Psoas muscle (tissue), 8 donors: ENCODE measurements at regions of chr4 and their contacts with region 1.

Region 1: DNA sequence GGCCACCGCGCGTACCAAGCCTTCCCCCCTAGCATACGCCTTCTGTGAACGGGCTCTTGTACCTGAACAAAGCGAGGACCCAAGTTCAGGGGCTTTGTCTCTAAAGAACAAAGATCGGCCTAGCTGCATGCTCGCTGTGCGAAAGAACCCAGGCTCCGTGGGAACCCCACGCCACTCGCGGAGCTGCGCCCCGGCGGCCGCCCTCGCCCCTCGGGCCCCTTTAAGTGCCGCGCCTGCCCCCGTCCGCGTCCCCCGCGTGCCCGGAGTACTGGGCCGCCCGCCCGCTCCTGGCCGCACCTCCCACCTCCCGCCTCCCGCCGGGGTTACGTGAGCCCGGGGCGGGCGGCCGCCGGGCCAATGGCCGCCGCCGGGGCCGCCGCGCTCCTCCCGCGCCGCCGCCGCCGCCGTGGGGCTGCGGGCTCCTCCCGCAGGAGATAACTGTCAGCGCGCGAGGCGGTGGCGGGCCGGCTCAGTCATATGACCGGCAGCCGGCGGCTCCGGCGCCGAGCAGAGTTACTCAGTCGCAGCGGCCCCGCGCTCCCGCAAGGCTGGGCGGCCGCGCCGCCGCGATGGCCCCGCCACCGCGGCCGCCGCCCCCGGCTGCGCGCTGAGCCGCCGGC is at the start of gene FNIP2:
- DNase-seq: peak; percentile 84 to 93
- ATAC-seq: peak; percentile 92 to 96 (median 94)
- H3K4me3 ChIP-seq: peak within 1 kb of the TSS; percentile 70
- H3K27ac ChIP-seq: peak within 1 kb of the TSS; percentile 96
- H3K4me1 ChIP-seq: peaks cover 43% of the 10 kb centered on the region
- H3K27me3 ChIP-seq: no peaks in the 10 kb centered on the region
- CTCF ChIP-seq: no peak
- total RNA-seq, gene FNIP2: 31.5 to 92.1 (median 53.4) TPM

Region 2: DNA sequence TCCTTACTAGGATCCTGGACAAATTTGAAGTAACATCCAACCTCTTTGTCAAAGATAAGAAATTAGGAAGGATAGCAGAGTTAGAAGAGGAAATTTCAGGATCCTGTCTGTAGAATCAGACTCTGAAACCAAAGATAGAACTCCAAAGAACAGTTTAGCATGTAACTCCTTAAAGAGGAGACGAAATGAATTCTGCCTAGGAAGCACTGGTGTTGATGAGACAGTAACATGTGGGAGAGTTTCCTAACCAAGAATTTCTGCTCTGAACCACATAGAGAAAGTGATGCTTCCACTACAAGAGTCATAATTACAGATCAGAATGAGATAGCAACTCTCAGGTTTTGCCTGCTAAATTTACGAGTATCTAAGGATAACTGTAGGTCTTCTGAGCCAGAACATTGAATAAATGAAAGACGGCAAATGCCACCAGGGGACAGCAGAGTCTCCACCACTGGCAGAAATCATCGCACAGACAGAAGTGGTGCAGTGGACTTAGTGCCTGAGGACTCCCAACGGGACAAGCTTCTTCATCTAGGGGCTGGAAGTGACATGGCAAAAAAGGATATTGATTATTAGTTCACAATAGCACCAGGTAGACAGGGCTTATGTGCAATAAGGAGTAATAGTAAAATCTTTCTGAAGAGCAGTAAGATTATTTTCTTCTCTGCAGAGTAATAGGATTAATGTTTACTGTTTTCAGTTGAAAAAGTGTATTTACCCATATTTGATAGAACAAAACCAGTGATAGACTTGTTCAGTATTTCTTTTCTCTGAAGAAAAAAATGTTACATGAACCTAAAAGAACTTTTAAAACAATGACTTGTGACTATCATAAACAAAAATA is 38.7 kb before region 1 on chr4:
- intact Hi-C with region 1: loop called (anchors 5 kb)
- DNase-seq: peak; percentile 43 to 66
- ATAC-seq: peak; percentile 87 to 99 (median 94)
- H3K4me3 ChIP-seq: no peak overlapping the region
- H3K27ac ChIP-seq: no peak overlapping the region
- H3K4me1 ChIP-seq: no peaks in the 10 kb centered on the region
- H3K27me3 ChIP-seq: no peaks in the 10 kb centered on the region
- CTCF ChIP-seq: peak; percentile 86

Region 3: GRCh38 chr4:158809611-158810486 is 41.2 kb after region 1 on chr4:
- intact Hi-C with region 1: loop called in 1 of 2 experiments (anchors 2 kb)
- DNase-seq: no peak
- ATAC-seq: peak; percentile 74 to 83 (median 78)
- H3K4me3 ChIP-seq: peak overlapping the region; percentile 17
- H3K27ac ChIP-seq: peak overlapping the region; percentile 90
- H3K4me1 ChIP-seq: peaks cover 82% of the 10 kb centered on the region
- H3K27me3 ChIP-seq: no peaks in the 10 kb centered on the region
- CTCF ChIP-seq: no peak

Region 4: GRCh38 chr4:158824425-158825274 is 56.0 kb after region 1 on chr4:
- intact Hi-C with region 1: loop called in 1 of 2 experiments (anchors 1 kb)
- DNase-seq: peak in 1 of 2 donors; percentile 43
- ATAC-seq: peak in 3 of 4 donors; percentile 42 to 63 (median 56)
- H3K4me3 ChIP-seq: peak overlapping the region; percentile 4
- H3K27ac ChIP-seq: peak overlapping the region; percentile 85
- H3K4me1 ChIP-seq: peaks cover 70% of the 10 kb centered on the region
- H3K27me3 ChIP-seq: no peaks in the 10 kb centered on the region
- CTCF ChIP-seq: no peak

Region 5: GRCh38 chr4:158841540-158841939 is 72.9 kb after region 1 on chr4:
- intact Hi-C with region 1: loop called in 1 of 2 experiments (anchors 5 kb)
- DNase-seq: no peak
- ATAC-seq: peak; percentile 60 to 96 (median 88)
- H3K4me3 ChIP-seq: no peak overlapping the region
- H3K27ac ChIP-seq: peak overlapping the region; percentile 36
- H3K4me1 ChIP-seq: peaks cover 10% of the 10 kb centered on the region
- H3K27me3 ChIP-seq: no peaks in the 10 kb centered on the region
- CTCF ChIP-seq: no peak

Region 6: GRCh38 chr4:159102622-159103383 is 334.1 kb after region 1 on chr4 and contains the start of gene RAPGEF2:
- intact Hi-C with region 1: loop called in 1 of 2 experiments (anchors 5 kb)
- DNase-seq: peak; percentile 89 to 94
- ATAC-seq: peak; percentile 93 to 96 (median 94)
- H3K4me3 ChIP-seq: peak within 1 kb of the TSS; percentile 99
- H3K27ac ChIP-seq: peak within 1 kb of the TSS; percentile 97
- H3K4me1 ChIP-seq: peaks cover 28% of the 10 kb centered on the region
- H3K27me3 ChIP-seq: no peaks in the 10 kb centered on the region
- CTCF ChIP-seq: no peak
- total RNA-seq, gene RAPGEF2: 20.4 to 35.2 (median 22.3) TPM